IMR-90 (cell line): ENCODE measurements at regions of chr17 and their contacts with region 1.

Region 1: DNA sequence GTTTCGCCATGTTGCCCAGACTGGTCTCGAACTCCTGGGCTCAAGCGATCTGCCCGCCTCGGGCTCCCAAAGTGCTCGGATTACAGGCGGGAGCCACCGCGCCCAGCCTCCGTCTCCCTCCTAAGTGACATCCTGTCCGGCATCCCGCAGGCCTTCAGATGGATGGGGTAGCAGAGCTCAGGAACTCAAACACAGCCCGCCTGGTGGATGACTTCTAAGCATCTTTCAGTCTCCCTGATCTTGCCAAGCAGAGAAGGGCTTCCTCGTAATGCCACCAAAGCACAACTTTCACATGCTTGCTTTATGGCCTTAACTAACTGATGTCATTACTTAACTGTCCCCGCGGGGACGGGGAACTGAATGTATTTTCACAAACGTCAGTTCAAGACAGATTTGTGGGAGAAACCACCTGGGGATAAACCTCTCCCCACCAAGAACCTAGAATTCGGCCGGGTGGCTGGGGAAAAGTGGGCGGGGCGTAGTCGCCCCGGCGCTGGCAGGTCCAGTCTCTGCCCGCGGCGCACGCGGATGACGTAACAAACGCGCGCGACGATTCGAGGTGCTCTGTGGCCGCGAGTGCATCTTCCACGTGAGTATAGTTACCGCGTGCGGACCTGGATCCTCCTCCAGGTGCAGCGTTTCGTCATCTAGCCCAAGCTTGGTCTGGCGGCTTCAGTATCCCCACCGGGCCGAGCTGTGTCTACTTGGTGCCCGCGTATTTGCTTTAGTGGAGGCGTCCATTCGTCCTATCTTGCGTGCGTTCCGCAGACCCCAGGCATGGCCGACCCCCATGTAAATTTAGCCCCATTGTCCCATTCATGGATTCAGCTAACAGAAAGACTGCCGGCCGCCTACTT is at the start of gene PFAS:
- DNase-seq: peak; percentile 89
- ATAC-seq: peak; percentile 74
- H3K4me3 ChIP-seq: peak within 1 kb of the TSS; percentile 76
- H3K27ac ChIP-seq: peak within 1 kb of the TSS; percentile 80
- H3K4me1 ChIP-seq: no peaks in the 10 kb centered on the region; the same call in 1 of the 2 replicates
- H3K27me3 ChIP-seq: no peaks in the 10 kb centered on the region
- CTCF ChIP-seq: no peak
- POLR2A ChIP-seq: peak; percentile 54
- RAD21 ChIP-seq: no peak
- total RNA-seq, gene PFAS: 22.2 and 26.2 TPM in 2 replicates

Region 2: DNA sequence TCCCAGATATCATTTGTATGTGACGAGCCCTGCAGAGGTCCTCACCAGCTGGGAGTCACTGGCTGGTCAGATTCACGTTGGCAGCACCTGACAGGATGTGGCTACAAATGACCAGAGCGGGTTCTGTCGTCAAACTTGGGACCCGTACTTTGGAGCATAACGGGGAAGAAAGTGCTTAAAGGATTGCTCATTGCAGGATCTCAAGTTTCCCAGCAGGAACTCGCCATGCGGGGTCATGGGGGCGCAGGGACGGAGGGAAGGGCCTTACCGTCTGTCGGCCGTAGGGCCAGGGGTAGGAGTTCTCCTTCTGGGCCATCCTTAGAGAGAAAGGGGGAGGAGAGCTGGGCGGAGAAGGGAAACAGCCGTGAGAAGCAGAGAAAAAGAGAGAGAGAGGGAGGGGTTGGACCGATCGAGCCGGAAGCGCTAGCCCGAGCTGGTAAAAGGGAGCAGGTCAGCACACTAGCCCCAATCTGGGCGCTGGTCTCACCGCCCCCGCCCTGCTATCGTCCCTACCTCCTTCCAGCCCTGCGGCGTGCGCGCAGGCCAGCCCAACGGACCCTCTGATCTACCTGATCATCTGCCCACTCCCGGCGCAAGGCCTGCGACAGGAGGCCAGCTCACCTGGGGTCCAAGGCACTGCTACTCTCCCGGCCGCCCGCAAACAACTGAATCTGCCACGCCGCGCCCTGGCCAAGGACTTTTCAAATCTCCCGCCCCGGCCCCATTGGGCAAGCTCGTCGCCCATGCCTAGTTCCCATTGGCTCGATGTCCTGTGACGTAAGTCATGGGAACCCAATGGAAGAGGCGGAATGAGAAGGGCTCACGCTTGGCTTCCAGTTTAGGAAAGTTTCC is 38.8 kb before region 1 on chr17 and contains the start of gene AURKB:
- CTCF ChIA-PET with region 1: no interaction called
- POLR2A ChIA-PET with region 1: interaction called, 10 read pairs
- dilution Hi-C with region 1: no loop called
- in situ Hi-C with region 1: no loop called
- intact Hi-C with region 1: no loop called
- DNase-seq: peak; percentile 97
- ATAC-seq: peak; percentile 97
- H3K4me3 ChIP-seq: peak within 1 kb of the TSS; percentile 74
- H3K27ac ChIP-seq: peak within 1 kb of the TSS; percentile 83; the same call in 1 of the 2 replicates
- H3K4me1 ChIP-seq: 0 out of 2 replicates have a peak, but pooled peaks cover 7% of the 10 kb centered on the region
- H3K27me3 ChIP-seq: no peaks in the 10 kb centered on the region
- CTCF ChIP-seq: no peak
- POLR2A ChIP-seq: peak; percentile 79
- RAD21 ChIP-seq: no peak
- total RNA-seq, gene AURKB: 38.9 and 45.9 TPM in 2 replicates

Region 3: GRCh38 chr17:8288336-8289102 is 39.5 kb after region 1 on chr17 and contains the start of gene RANGRF:
- CTCF ChIA-PET with region 1: interaction called, 3 read pairs
- POLR2A ChIA-PET with region 1: no interaction called
- dilution Hi-C with region 1: no loop called
- in situ Hi-C with region 1: no loop called
- intact Hi-C with region 1: loop called (anchors 5 kb)
- DNase-seq: peak; percentile 75
- ATAC-seq: peak; percentile 96
- H3K4me3 ChIP-seq: peak within 1 kb of the TSS; percentile 98
- H3K27ac ChIP-seq: peak within 1 kb of the TSS; percentile 91
- H3K4me1 ChIP-seq: peaks cover 10% of the 10 kb centered on the region; the same call in 1 of the 2 replicates
- H3K27me3 ChIP-seq: no peaks in the 10 kb centered on the region
- CTCF ChIP-seq: no peak
- POLR2A ChIP-seq: peak; percentile 64
- RAD21 ChIP-seq: no peak
- total RNA-seq, gene RANGRF: 16.1 and 19.5 TPM in 2 replicates

Region 4: GRCh38 chr17:8320990-8321389 is 72.0 kb after region 1 on chr17:
- CTCF ChIA-PET with region 1: no interaction called
- POLR2A ChIA-PET with region 1: no interaction called
- dilution Hi-C with region 1: no loop called
- in situ Hi-C with region 1: no loop called
- intact Hi-C with region 1: no loop called
- DNase-seq: no peak
- ATAC-seq: peak; percentile 29; the same call in 1 of the 2 replicates
- H3K4me3 ChIP-seq: no peak overlapping the region
- H3K27ac ChIP-seq: no peak overlapping the region
- H3K4me1 ChIP-seq: no peaks in the 10 kb centered on the region
- H3K27me3 ChIP-seq: peaks cover 41% of the 10 kb centered on the region
- CTCF ChIP-seq: no peak
- POLR2A ChIP-seq: no peak
- RAD21 ChIP-seq: no peak

Region 5: DNA sequence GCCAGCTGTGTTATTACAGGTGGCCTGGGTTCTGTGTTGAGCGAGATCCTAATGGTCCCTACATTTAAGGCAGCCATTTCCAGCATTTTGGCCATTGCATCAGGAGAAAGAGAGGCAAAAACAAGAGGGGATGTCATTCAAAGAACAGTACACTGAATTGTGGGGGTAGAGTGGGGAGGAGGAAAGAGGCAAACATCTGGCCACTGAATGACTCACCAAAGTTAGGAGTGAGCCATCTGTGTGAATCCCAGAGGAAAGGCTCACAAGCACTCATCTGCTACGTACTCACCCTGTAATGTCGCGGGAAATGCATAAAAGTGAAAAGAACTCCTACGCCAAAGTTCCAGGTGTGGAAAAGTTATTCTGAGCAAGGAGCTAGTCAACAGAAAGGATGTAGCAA is 110.8 kb after region 1 on chr17:
- CTCF ChIA-PET with region 1: no interaction called
- POLR2A ChIA-PET with region 1: no interaction called
- dilution Hi-C with region 1: no loop called
- in situ Hi-C with region 1: no loop called
- intact Hi-C with region 1: no loop called
- DNase-seq: peak; percentile 96
- ATAC-seq: peak; percentile 87
- H3K4me3 ChIP-seq: no peak overlapping the region
- H3K27ac ChIP-seq: no peak overlapping the region
- H3K4me1 ChIP-seq: peaks cover 7% of the 10 kb centered on the region
- H3K27me3 ChIP-seq: no peaks in the 10 kb centered on the region
- CTCF ChIP-seq: no peak
- POLR2A ChIP-seq: no peak
- RAD21 ChIP-seq: no peak

Region 6: GRCh38 chr17:8376271-8377067 is 127.5 kb after region 1 on chr17 and contains the start of gene KRABD2:
- CTCF ChIA-PET with region 1: no interaction called
- POLR2A ChIA-PET with region 1: no interaction called
- dilution Hi-C with region 1: no loop called
- in situ Hi-C with region 1: no loop called
- intact Hi-C with region 1: loop called (anchors 2 kb)
- DNase-seq: peak; percentile 79
- ATAC-seq: peak; percentile 97
- H3K4me3 ChIP-seq: peak within 1 kb of the TSS; percentile 85
- H3K27ac ChIP-seq: peak within 1 kb of the TSS; percentile 97
- H3K4me1 ChIP-seq: peaks cover 6% of the 10 kb centered on the region
- H3K27me3 ChIP-seq: no peaks in the 10 kb centered on the region
- CTCF ChIP-seq: peak; percentile 66
- POLR2A ChIP-seq: peak; percentile 69; the same call in 1 of the 2 replicates
- RAD21 ChIP-seq: no peak